K562 (cell line): ENCODE measurements at regions of chr18 and their contacts with region 1.

Region 1: DNA sequence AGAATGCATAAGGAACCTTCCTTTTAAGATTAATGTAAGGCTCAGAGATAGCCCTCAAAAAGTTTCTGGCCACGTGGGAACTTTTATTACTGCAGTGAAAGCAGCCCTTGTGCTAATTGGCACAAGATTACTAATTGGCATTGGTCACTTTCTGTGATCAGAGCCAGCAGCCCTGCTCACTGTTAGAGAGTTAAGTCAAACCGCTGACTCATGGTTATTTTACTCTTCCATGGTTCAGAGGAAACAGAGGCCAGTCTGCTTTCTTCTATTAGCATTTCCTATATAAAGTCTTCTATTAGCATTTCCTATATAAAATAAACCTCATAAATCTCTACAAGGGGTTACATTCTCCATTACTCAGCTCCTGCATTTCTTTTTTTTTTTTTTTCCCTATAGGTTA is 1.5 kb upstream of the SLC35G4 start:
- DNase-seq: no peak
- ATAC-seq: no peak
- H3K4me3 ChIP-seq: no peak overlapping the region
- H3K27ac ChIP-seq: no peak overlapping the region
- H3K4me1 ChIP-seq: no peaks in the 10 kb centered on the region
- H3K27me3 ChIP-seq: peaks cover 0 to 3% of the 10 kb centered on the region in 2 experiments; a peak in 1 of 5 replicates
- CTCF ChIP-seq: no peak
- EP300 ChIP-seq: no peak
- POLR2A ChIP-seq: no peak
- RAD21 ChIP-seq: no peak

Region 2: DNA sequence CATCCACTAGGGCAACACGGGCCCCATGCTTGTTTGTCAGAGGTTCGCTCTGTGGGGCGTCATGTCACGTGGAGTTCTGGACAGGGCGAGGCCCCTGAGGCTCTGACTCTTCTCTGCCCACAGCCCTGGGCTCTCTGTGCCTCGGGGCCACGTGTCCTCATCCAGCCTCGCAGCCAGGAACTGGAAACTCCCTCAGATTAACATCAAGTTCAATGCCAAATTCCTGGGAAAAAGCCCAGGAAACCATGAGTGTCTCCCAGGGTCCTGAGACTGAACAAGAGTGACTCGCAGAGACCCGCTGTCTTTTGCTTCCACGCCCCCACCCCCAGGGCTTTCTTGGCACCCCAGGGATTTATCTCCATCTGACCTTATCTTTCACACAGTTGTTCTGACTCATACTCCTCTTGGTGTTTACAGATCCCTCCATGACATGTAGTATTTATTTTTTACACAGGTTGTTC is 284.5 kb before region 1 on chr18:
- CTCF ChIA-PET with region 1: no interaction called
- POLR2A ChIA-PET with region 1: no interaction called
- in situ Hi-C with region 1: no loop called
- intact Hi-C with region 1: no loop called
- DNase-seq: no peak
- ATAC-seq: no peak; the same call in 1 of the 3 replicates
- H3K4me3 ChIP-seq: no peak overlapping the region
- H3K27ac ChIP-seq: no peak overlapping the region
- H3K4me1 ChIP-seq: no peaks in the 10 kb centered on the region
- H3K27me3 ChIP-seq: no peaks in the 10 kb centered on the region
- CTCF ChIP-seq: no peak
- EP300 ChIP-seq: no peak
- POLR2A ChIP-seq: no peak
- RAD21 ChIP-seq: no peak

Region 3: GRCh38 chr18:11561293-11561692 is 46.6 kb before region 1 on chr18:
- CTCF ChIA-PET with region 1: no interaction called
- POLR2A ChIA-PET with region 1: no interaction called
- in situ Hi-C with region 1: no loop called
- intact Hi-C with region 1: no loop called
- DNase-seq: no peak
- ATAC-seq: no peak
- H3K4me3 ChIP-seq: no peak overlapping the region
- H3K27ac ChIP-seq: no peak overlapping the region
- H3K4me1 ChIP-seq: no peaks in the 10 kb centered on the region
- H3K27me3 ChIP-seq: peaks cover 4 to 19% of the 10 kb centered on the region in 2 experiments; a peak in 4 of 5 replicates
- CTCF ChIP-seq: no peak
- EP300 ChIP-seq: no peak
- POLR2A ChIP-seq: no peak
- RAD21 ChIP-seq: no peak

Region 4: GRCh38 chr18:11649839-11650238 is 41.9 kb after region 1 on chr18:
- CTCF ChIA-PET with region 1: no interaction called
- POLR2A ChIA-PET with region 1: no interaction called
- in situ Hi-C with region 1: loop called (anchors 5 kb)
- intact Hi-C with region 1: no loop called
- DNase-seq: no peak
- ATAC-seq: no peak
- H3K4me3 ChIP-seq: no peak overlapping the region
- H3K27ac ChIP-seq: no peak overlapping the region
- H3K4me1 ChIP-seq: no peaks in the 10 kb centered on the region
- H3K27me3 ChIP-seq: peaks cover 5 to 24% of the 10 kb centered on the region in 2 experiments; a peak in 2 of 5 replicates
- CTCF ChIP-seq: no peak
- EP300 ChIP-seq: no peak
- POLR2A ChIP-seq: no peak
- RAD21 ChIP-seq: no peak